ENCODE measurements at regions of chr17 and their contacts with region 1.

Region 1: GRCh38 chr17:44636562-44636961 is 19.7 kb upstream of the MEIOC start:
- DNase-seq: no peak
- ATAC-seq: peak; percentile 51

Region 2: DNA sequence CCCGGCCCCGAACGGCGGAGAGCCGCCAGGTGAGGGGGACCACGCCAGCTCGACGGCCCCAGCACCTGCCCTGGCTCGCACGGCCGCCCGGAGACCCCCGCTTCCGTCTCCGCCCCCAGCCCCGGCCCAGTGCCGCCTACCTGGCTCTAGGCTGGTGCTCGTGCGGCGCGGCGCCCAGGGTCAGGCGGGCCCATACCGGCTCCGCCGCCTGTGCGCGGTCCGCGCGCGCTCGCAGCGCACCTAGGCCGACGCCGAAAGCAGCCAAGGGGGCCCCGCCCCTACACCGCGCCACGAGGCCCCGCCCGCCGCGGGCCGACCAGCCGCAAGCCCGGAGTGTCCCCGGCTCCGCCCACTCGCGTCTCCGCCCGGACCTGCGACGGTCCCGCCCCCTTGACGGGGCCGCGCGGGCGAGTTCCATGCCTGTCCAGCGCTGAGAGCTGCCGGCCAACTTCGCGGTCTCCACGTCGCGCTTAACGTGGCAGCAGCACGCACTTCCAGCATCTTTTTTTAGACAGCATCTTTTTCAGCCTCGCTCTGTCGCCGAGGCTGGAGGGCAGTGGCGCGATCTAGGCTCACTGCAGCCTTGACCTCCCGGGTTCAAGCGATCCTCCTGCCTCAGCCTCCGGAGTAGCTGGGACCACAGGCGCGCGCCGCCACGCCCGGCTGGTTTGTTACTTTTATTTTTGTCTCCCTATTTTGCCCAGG is 311.8 kb before region 1 on chr17 and contains the start of gene SLC25A39:
- intact Hi-C with region 1: no loop called
- DNase-seq: peak; percentile 98
- ATAC-seq: peak; percentile 91
- total RNA-seq, gene SLC25A39: 52.3 TPM

Region 3: GRCh38 chr17:44533533-44534246 is 102.9 kb before region 1 on chr17:
- intact Hi-C with region 1: loop called (anchors 5 kb)
- DNase-seq: peak; percentile 94
- ATAC-seq: peak; percentile 94

Measured in left ventricle myocardium superior (tissue), 1 donor.